ENCODE measurements at regions of chr15 and their contacts with region 1.

Region 1: GRCh38 chr15:101652098-101652782 is at the start of gene TM2D3:
- DNase-seq: peak; percentile 97
- ATAC-seq: peak; percentile 89
- H3K4me3 ChIP-seq: peak within 1 kb of the TSS; percentile 79 to 94 (median 89)
- H3K4me3 Mint-ChIP-seq: peak within 1 kb of the TSS; percentile 93
- H3K27ac ChIP-seq: peak within 1 kb of the TSS; percentile 94 to 98
- H3K27ac Mint-ChIP-seq: peak within 1 kb of the TSS; percentile 98
- H3K4me1 ChIP-seq: peaks cover 21 to 23% of the 10 kb centered on the region in 2 donors
- H3K4me1 Mint-ChIP-seq: peaks cover 33% of the 10 kb centered on the region
- H3K27me3 ChIP-seq: no peaks in the 10 kb centered on the region
- H3K27me3 Mint-ChIP-seq: no peaks in the 10 kb centered on the region
- CTCF ChIP-seq: peak; percentile 76
- total RNA-seq, gene TM2D3: 56.4 and 63.5 TPM in 2 replicates

Region 2: DNA sequence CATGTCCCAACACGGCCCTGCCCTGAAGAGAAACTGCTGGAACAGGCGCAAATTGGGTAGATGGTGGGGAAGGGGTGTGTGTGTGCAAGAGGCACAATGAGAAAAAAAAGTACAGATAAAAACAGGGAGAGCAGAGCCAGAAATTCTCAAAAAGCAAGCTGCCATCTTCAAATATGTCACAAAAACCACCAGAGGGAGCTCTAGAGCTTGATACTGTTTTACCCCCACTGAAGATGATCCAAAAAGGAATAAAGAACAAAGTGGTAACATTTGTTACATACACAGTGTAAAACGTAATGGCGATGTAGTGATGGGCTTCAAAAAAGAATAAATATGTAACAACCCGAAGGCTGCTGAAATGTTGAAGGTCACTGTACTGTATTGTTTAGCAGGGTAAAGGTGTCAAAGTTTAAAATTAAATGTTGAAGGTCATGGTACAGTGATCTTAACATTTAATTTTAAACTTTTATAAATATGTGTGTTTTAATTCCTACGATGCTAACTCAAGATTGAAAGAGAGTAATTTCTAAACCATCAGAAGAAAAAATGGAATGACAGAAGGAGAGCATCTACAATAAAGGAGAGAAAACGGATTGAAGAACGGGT is 363.2 kb before region 1 on chr15:
- CTCF ChIA-PET with region 1: interaction called, 27 read pairs
- POLR2A ChIA-PET with region 1: interaction called, 14 read pairs
- intact Hi-C with region 1: no loop called
- DNase-seq: peak; percentile 75
- ATAC-seq: no peak
- H3K4me3 ChIP-seq: no peak overlapping the region
- H3K4me3 Mint-ChIP-seq: no peak overlapping the region
- H3K27ac ChIP-seq: peak overlapping the region in 1 of 2 donors; percentile 4
- H3K27ac Mint-ChIP-seq: peak overlapping the region; percentile 27
- H3K4me1 ChIP-seq: peaks cover 18 to 23% of the 10 kb centered on the region in 2 donors
- H3K4me1 Mint-ChIP-seq: peaks cover 39% of the 10 kb centered on the region
- H3K27me3 ChIP-seq: no peaks in the 10 kb centered on the region
- H3K27me3 Mint-ChIP-seq: no peaks in the 10 kb centered on the region
- CTCF ChIP-seq: peak; percentile 80

Region 3: DNA sequence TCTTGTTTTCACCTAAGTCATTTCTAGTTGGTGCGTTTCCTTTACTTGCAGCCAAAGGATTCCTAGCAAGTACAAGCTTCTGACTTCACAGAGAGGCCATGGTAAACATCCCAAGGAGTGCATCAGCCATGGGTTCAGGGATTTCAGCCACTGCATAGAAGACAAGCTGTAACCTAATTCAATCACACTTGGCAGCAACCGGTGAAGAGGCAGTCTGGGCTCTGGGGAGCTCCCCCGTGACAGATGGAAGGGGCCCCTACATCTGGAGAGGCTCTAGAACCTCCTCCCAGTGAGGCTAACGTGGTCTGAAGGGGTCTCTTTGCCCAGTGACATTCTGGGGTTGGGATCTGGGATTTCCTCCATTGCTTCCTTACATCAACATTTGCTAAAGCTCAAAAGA is 348.8 kb before region 1 on chr15:
- CTCF ChIA-PET with region 1: interaction called, 12 read pairs
- POLR2A ChIA-PET with region 1: interaction called, 5 read pairs
- intact Hi-C with region 1: no loop called
- DNase-seq: no peak
- ATAC-seq: no peak
- H3K4me3 ChIP-seq: no peak overlapping the region
- H3K4me3 Mint-ChIP-seq: no peak overlapping the region
- H3K27ac ChIP-seq: no peak overlapping the region
- H3K27ac Mint-ChIP-seq: no peak overlapping the region
- H3K4me1 ChIP-seq: no peaks in the 10 kb centered on the region
- H3K4me1 Mint-ChIP-seq: no peaks in the 10 kb centered on the region
- H3K27me3 ChIP-seq: no peaks in the 10 kb centered on the region
- H3K27me3 Mint-ChIP-seq: no peaks in the 10 kb centered on the region
- CTCF ChIP-seq: no peak

Region 4: GRCh38 chr15:101578437-101578894 is 73.8 kb before region 1 on chr15:
- CTCF ChIA-PET with region 1: no interaction called
- POLR2A ChIA-PET with region 1: no interaction called
- intact Hi-C with region 1: no loop called
- DNase-seq: no peak
- ATAC-seq: no peak
- H3K4me3 ChIP-seq: no peak overlapping the region
- H3K4me3 Mint-ChIP-seq: no peak overlapping the region
- H3K27ac ChIP-seq: no peak overlapping the region
- H3K27ac Mint-ChIP-seq: no peak overlapping the region
- H3K4me1 ChIP-seq: no peaks in the 10 kb centered on the region
- H3K4me1 Mint-ChIP-seq: no peaks in the 10 kb centered on the region
- H3K27me3 ChIP-seq: peaks cover 0 to 12% (median 0%) of the 10 kb centered on the region in 4 experiments
- H3K27me3 Mint-ChIP-seq: peaks cover 52% of the 10 kb centered on the region
- CTCF ChIP-seq: no peak

Region 5: GRCh38 chr15:101625980-101626379 is 26.3 kb before region 1 on chr15:
- CTCF ChIA-PET with region 1: no interaction called
- POLR2A ChIA-PET with region 1: no interaction called
- intact Hi-C with region 1: no loop called
- DNase-seq: no peak
- ATAC-seq: no peak
- H3K4me3 ChIP-seq: no peak overlapping the region
- H3K4me3 Mint-ChIP-seq: no peak overlapping the region
- H3K27ac ChIP-seq: no peak overlapping the region
- H3K27ac Mint-ChIP-seq: no peak overlapping the region
- H3K4me1 ChIP-seq: no peaks in the 10 kb centered on the region
- H3K4me1 Mint-ChIP-seq: peaks cover 2% of the 10 kb centered on the region
- H3K27me3 ChIP-seq: no peaks in the 10 kb centered on the region
- H3K27me3 Mint-ChIP-seq: no peaks in the 10 kb centered on the region
- CTCF ChIP-seq: no peak

Region 6: DNA sequence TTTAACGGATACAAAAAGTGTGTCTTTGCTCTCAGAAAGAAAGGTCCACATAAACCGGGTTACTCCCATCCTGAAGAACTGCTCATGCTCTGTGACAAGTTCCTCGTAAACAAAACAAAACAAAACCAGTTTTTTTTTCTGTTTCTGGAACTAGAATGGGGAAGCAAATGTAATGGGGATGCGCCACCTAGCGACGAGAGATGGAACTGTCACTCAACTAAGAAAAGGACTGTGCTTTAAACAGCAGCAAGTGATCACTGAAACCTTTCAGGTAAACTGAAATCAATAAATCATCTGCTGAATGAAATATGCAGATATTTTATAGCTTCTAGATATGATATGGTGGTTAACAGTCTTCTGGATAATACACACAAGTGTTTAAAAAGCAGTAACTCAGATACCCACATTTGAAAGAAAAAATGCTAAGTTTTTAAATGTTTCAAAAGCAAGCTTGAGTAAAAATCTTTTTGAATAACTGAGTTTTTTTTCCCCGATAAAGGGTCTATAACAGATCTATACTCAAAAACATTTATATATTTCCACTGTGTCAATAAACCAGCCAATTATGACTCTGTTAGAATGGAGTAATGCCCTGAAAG is 11.0 kb before region 1 on chr15:
- CTCF ChIA-PET with region 1: interaction called, 9 read pairs
- POLR2A ChIA-PET with region 1: no interaction called
- intact Hi-C with region 1: loop called (anchors 1 kb)
- DNase-seq: peak; percentile 86
- ATAC-seq: peak; percentile 73
- H3K4me3 ChIP-seq: peak overlapping the region in 1 of 5 experiments; percentile 32
- H3K4me3 Mint-ChIP-seq: peak overlapping the region; percentile 33
- H3K27ac ChIP-seq: peak overlapping the region; percentile 37 to 53
- H3K27ac Mint-ChIP-seq: peak overlapping the region; percentile 82
- H3K4me1 ChIP-seq: peaks cover 18 to 19% of the 10 kb centered on the region in 2 donors
- H3K4me1 Mint-ChIP-seq: peaks cover 18% of the 10 kb centered on the region
- H3K27me3 ChIP-seq: no peaks in the 10 kb centered on the region
- H3K27me3 Mint-ChIP-seq: no peaks in the 10 kb centered on the region
- CTCF ChIP-seq: peak; percentile 93

Region 7: DNA sequence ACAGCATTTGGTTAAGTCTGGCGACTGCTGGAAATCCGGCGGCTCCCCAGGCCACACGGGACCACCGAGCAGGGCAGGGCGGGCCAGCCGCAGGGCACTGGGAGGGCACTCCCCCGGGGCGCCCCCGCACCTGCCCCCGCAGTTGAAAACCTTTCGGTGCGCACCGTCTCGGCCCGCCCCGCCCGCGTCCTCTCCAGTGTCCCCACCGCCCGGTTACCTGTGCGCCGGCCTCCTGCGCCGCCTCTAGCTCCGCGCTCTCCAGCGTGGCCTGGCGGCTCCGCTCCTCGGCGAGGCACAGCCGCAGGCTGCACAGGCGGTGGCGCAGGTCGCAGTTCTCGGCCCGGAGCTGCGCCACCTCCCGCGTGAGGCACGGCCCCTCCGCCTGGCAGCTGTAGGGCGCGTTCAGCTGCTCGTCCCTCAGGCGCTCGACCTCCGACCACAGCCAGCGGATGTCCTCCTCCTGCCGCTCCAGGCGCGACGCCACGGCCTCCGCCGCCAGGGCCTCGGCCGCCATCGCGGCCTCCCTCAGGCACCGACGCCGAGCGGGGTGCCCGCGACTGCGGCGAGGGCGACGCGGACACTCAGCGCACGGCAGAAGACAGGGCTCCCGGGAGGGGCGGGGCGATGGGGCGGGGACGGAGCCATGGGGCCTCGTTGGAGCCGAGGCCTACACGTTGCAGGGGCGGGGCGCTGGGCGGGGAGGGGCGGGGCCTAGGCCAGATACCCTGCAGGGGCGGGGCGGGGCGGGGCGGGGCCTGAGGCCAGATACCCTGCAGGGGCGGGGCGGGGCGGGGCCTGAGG is 71.8 kb after region 1 on chr15 and contains the start of gene TARS3:
- CTCF ChIA-PET with region 1: interaction called, 6 read pairs
- POLR2A ChIA-PET with region 1: interaction called, 5 read pairs
- intact Hi-C with region 1: loop called (anchors 1 kb)
- DNase-seq: peak; percentile 96
- ATAC-seq: peak; percentile 89
- H3K4me3 ChIP-seq: peak within 1 kb of the TSS; percentile 49 to 74 (median 69)
- H3K4me3 Mint-ChIP-seq: peak within 1 kb of the TSS; percentile 82
- H3K27ac ChIP-seq: peak within 1 kb of the TSS; percentile 45 to 77
- H3K27ac Mint-ChIP-seq: peak within 1 kb of the TSS; percentile 80
- H3K4me1 ChIP-seq: peaks cover 10 to 11% of the 10 kb centered on the region in 2 donors
- H3K4me1 Mint-ChIP-seq: peaks cover 17% of the 10 kb centered on the region
- H3K27me3 ChIP-seq: no peaks in the 10 kb centered on the region
- H3K27me3 Mint-ChIP-seq: no peaks in the 10 kb centered on the region
- CTCF ChIP-seq: no peak
- total RNA-seq, gene TARS3: 27.0 and 32.3 TPM in 2 replicates

Measured in B cell (primary cell).